ENCODE measurements at regions of chr1 and their contacts with region 1.

Region 1: GRCh38 chr1:77671836-77672235 is 10.6 kb downstream of the ZZZ3 start:
- DNase-seq: no peak
- ATAC-seq: no peak
- H3K4me3 Mint-ChIP-seq: no peak overlapping the region
- H3K27ac Mint-ChIP-seq: no peak overlapping the region
- H3K4me1 Mint-ChIP-seq: peaks cover 41% of the 10 kb centered on the region
- H3K27me3 Mint-ChIP-seq: no peaks in the 10 kb centered on the region

Region 2: GRCh38 chr1:77655431-77655974 is 16.3 kb before region 1 on chr1:
- CTCF ChIA-PET with region 1: no interaction called
- POLR2A ChIA-PET with region 1: no interaction called
- DNase-seq: no peak
- ATAC-seq: no peak
- H3K4me3 Mint-ChIP-seq: no peak overlapping the region
- H3K27ac Mint-ChIP-seq: no peak overlapping the region
- H3K4me1 Mint-ChIP-seq: no peaks in the 10 kb centered on the region
- H3K27me3 Mint-ChIP-seq: no peaks in the 10 kb centered on the region

Region 3: GRCh38 chr1:77683160-77684148 is 11.6 kb after region 1 on chr1:
- CTCF ChIA-PET with region 1: interaction called, 3 read pairs
- POLR2A ChIA-PET with region 1: interaction called, 11 read pairs
- DNase-seq: peak; percentile 94
- ATAC-seq: peak; percentile 78
- H3K4me3 Mint-ChIP-seq: peak overlapping the region; percentile 81
- H3K27ac Mint-ChIP-seq: peak overlapping the region; percentile 91
- H3K4me1 Mint-ChIP-seq: peaks cover 25% of the 10 kb centered on the region
- H3K27me3 Mint-ChIP-seq: no peaks in the 10 kb centered on the region